Colonic mucosa (tissue), 4 donors: ENCODE measurements at regions of chr1 and their contacts with region 1.

Region 1: DNA sequence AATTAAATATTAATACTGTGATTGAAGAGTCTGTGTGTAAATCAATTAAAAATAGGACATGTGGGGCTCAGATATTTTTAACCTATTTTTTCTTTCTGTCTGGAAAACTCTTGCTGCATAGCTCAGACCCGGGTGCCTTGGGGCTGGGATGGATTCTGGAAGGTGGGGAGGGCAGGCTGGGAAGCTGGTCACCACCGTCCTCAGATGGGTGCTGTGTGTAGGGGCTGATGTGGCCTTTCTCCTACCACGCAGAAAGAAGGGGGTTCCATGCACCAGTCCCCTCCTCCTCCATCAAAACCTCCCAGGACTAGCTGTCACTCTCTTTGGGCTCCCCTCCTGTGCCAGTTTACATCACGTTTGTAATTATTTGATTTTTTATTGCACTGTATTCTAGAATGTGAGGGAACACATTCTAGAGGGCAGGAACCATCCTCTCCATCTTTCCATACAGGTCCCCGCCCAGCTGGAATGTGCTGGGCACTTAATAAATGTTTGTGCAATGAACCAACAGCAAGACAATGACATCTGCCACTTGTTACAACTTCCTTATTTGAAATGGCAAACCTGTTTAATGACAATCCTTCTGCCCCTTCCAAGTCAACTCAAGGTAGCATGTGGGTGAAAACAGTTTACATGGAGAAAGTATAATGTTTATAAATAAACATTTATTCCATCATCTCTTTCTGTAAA is 104.3 kb downstream of the EDEM3 start:
- DNase-seq: no peak
- H3K4me3 ChIP-seq: no peak overlapping the region
- H3K27ac ChIP-seq: no peak overlapping the region
- H3K4me1 ChIP-seq: no peaks in the 10 kb centered on the region
- H3K27me3 ChIP-seq: no peaks in the 10 kb centered on the region
- CTCF ChIP-seq: no peak

Region 2: GRCh38 chr1:184563308-184563707 is 87.0 kb before region 1 on chr1:
- intact Hi-C with region 1: loop called (anchors 10 kb)
- DNase-seq: no peak
- H3K4me3 ChIP-seq: no peak overlapping the region
- H3K27ac ChIP-seq: no peak overlapping the region
- H3K4me1 ChIP-seq: peaks cover under 1% of the 10 kb centered on the region
- H3K27me3 ChIP-seq: no peaks in the 10 kb centered on the region
- CTCF ChIP-seq: peak; percentile 46